Naive thymus-derived CD4-positive, alpha-beta T cell (primary cell): ENCODE measurements at regions of chr3 and their contacts with region 1.

Region 1: DNA sequence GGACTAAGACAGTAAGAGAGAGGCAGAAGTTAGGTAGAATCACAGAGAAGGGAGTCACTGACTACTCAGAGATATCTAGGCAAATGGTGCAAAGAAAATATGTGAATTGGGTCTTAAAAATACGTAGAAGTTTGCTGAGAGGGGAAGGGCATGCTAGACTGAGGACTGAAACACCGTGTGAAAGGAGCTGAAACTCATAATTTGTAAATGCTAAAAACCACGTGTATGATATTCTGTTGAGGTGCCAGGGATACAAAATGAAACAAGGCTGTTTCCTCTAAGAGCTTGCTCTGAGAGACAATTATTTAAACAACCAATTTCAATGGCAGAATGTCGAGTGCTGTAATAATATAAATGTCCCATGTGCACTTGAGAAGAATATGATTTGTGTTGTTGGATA is 47.2 kb downstream of the NCK1 start:
- DNase-seq: no peak
- ATAC-seq: peak; percentile 51
- H3K4me3 ChIP-seq: no peak overlapping the region
- H3K4me3 Mint-ChIP-seq: peak overlapping the region in 9 of 10 donors; percentile 7 to 67 (median 45)
- H3K27ac ChIP-seq: no peak overlapping the region
- H3K27ac Mint-ChIP-seq: peak overlapping the region; percentile 6 to 90 (median 53)
- H3K4me1 ChIP-seq: peaks cover 39 to 62% of the 10 kb centered on the region in 2 donors
- H3K4me1 Mint-ChIP-seq: peaks cover 50 to 94% (median 80%) of the 10 kb centered on the region in 7 donors
- H3K27me3 ChIP-seq: no peaks in the 10 kb centered on the region
- H3K27me3 Mint-ChIP-seq: no peaks in the 10 kb centered on the region

Region 2: GRCh38 chr3:136893848-136894443 is 15.2 kb before region 1 on chr3:
- CTCF ChIA-PET with region 1: no interaction called
- POLR2A ChIA-PET with region 1: no interaction called
- intact Hi-C with region 1: loop called in 1 of 2 experiments (anchors 2 kb)
- DNase-seq: no peak
- ATAC-seq: no peak
- H3K4me3 ChIP-seq: no peak overlapping the region
- H3K4me3 Mint-ChIP-seq: peak overlapping the region in 8 of 10 donors; percentile 1 to 49 (median 22)
- H3K27ac ChIP-seq: no peak overlapping the region
- H3K27ac Mint-ChIP-seq: peak overlapping the region in 3 of 9 donors; percentile 26 to 52 (median 34)
- H3K4me1 ChIP-seq: peaks cover 0 to 14% of the 10 kb centered on the region in 2 donors
- H3K4me1 Mint-ChIP-seq: peaks cover 38 to 77% (median 68%) of the 10 kb centered on the region in 7 donors
- H3K27me3 ChIP-seq: no peaks in the 10 kb centered on the region
- H3K27me3 Mint-ChIP-seq: no peaks in the 10 kb centered on the region

Region 3: GRCh38 chr3:136925425-136926190 is 16.4 kb after region 1 on chr3:
- CTCF ChIA-PET with region 1: interaction called, 3 read pairs
- POLR2A ChIA-PET with region 1: no interaction called
- intact Hi-C with region 1: loop called in 1 of 2 experiments (anchors 2 kb)
- DNase-seq: no peak
- ATAC-seq: no peak
- H3K4me3 ChIP-seq: no peak overlapping the region
- H3K4me3 Mint-ChIP-seq: no peak overlapping the region
- H3K27ac ChIP-seq: no peak overlapping the region
- H3K27ac Mint-ChIP-seq: no peak overlapping the region
- H3K4me1 ChIP-seq: peaks cover under 1 to 38% of the 10 kb centered on the region in 2 donors
- H3K4me1 Mint-ChIP-seq: peaks cover 42 to 82% (median 77%) of the 10 kb centered on the region in 7 donors
- H3K27me3 ChIP-seq: no peaks in the 10 kb centered on the region
- H3K27me3 Mint-ChIP-seq: no peaks in the 10 kb centered on the region

Region 4: GRCh38 chr3:136960836-136961518 is 51.8 kb after region 1 on chr3:
- CTCF ChIA-PET with region 1: no interaction called
- POLR2A ChIA-PET with region 1: no interaction called
- intact Hi-C with region 1: no loop called
- DNase-seq: no peak
- ATAC-seq: no peak
- H3K4me3 ChIP-seq: no peak overlapping the region
- H3K4me3 Mint-ChIP-seq: no peak overlapping the region
- H3K27ac ChIP-seq: no peak overlapping the region
- H3K27ac Mint-ChIP-seq: no peak overlapping the region
- H3K4me1 ChIP-seq: no peaks in the 10 kb centered on the region
- H3K4me1 Mint-ChIP-seq: peaks cover 0 to 8% (median 4%) of the 10 kb centered on the region in 7 donors
- H3K27me3 ChIP-seq: no peaks in the 10 kb centered on the region
- H3K27me3 Mint-ChIP-seq: no peaks in the 10 kb centered on the region